B cell (primary cell): ENCODE measurements at regions of chr1 and their contacts with region 1.

Region 1: DNA sequence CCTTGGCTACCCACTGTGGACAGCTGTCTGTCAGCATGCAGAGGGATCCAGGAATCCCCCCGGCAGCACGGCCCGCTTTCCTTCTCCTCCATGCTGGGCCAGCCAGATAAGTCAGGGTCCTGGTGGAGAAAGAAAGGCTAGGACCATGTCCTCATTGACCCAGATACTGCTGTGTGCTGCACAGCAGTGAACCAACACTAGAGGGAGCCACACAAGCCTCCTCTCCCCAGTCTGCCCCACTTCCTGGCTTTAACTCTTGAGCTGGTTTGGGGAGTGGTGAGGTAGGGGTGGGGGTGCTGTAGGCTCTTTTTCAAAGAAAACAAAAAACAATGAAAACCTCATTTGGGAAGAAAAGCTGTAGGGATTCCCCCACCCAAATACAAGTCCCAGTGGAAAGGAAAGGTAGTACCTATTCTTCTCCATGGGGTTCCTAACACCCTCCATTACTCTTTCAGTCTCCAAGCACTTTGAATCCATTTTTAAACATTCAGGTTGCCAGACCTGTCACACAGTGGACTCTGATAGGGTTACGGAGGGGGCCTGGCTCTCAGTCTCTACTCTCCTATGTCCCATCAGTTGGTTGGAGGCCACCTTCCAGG is 84.9 kb upstream of the CD1D start:
- DNase-seq: peak; percentile 49
- ATAC-seq: peak; percentile 51
- H3K4me3 ChIP-seq: no peak overlapping the region
- H3K4me3 Mint-ChIP-seq: no peak overlapping the region
- H3K27ac ChIP-seq: no peak overlapping the region
- H3K27ac Mint-ChIP-seq: no peak overlapping the region
- H3K4me1 ChIP-seq: no peaks in the 10 kb centered on the region
- H3K4me1 Mint-ChIP-seq: no peaks in the 10 kb centered on the region
- H3K27me3 ChIP-seq: no peaks in the 10 kb centered on the region
- H3K27me3 Mint-ChIP-seq: peaks cover 13% of the 10 kb centered on the region
- CTCF ChIP-seq: peak; percentile 65

Region 2: GRCh38 chr1:158107916-158108315 is 12.1 kb after region 1 on chr1:
- CTCF ChIA-PET with region 1: interaction called, 10 read pairs
- POLR2A ChIA-PET with region 1: no interaction called
- intact Hi-C with region 1: no loop called
- DNase-seq: no peak
- ATAC-seq: no peak
- H3K4me3 ChIP-seq: no peak overlapping the region
- H3K4me3 Mint-ChIP-seq: no peak overlapping the region
- H3K27ac ChIP-seq: no peak overlapping the region
- H3K27ac Mint-ChIP-seq: no peak overlapping the region
- H3K4me1 ChIP-seq: no peaks in the 10 kb centered on the region
- H3K4me1 Mint-ChIP-seq: peaks cover 2% of the 10 kb centered on the region
- H3K27me3 ChIP-seq: peaks cover 0 to 8% (median 2%) of the 10 kb centered on the region in 4 experiments
- H3K27me3 Mint-ChIP-seq: peaks cover 19% of the 10 kb centered on the region
- CTCF ChIP-seq: no peak

Region 3: GRCh38 chr1:158212320-158212719 is 116.5 kb after region 1 on chr1:
- CTCF ChIA-PET with region 1: no interaction called
- POLR2A ChIA-PET with region 1: no interaction called
- intact Hi-C with region 1: no loop called
- DNase-seq: no peak
- ATAC-seq: no peak
- H3K4me3 ChIP-seq: no peak overlapping the region
- H3K4me3 Mint-ChIP-seq: no peak overlapping the region
- H3K27ac ChIP-seq: no peak overlapping the region
- H3K27ac Mint-ChIP-seq: no peak overlapping the region
- H3K4me1 ChIP-seq: no peaks in the 10 kb centered on the region
- H3K4me1 Mint-ChIP-seq: no peaks in the 10 kb centered on the region
- H3K27me3 ChIP-seq: no peaks in the 10 kb centered on the region
- H3K27me3 Mint-ChIP-seq: no peaks in the 10 kb centered on the region
- CTCF ChIP-seq: no peak